Colonic mucosa (tissue), 4 donors: ENCODE measurements at regions of chr20 and their contacts with region 1.

Region 1: DNA sequence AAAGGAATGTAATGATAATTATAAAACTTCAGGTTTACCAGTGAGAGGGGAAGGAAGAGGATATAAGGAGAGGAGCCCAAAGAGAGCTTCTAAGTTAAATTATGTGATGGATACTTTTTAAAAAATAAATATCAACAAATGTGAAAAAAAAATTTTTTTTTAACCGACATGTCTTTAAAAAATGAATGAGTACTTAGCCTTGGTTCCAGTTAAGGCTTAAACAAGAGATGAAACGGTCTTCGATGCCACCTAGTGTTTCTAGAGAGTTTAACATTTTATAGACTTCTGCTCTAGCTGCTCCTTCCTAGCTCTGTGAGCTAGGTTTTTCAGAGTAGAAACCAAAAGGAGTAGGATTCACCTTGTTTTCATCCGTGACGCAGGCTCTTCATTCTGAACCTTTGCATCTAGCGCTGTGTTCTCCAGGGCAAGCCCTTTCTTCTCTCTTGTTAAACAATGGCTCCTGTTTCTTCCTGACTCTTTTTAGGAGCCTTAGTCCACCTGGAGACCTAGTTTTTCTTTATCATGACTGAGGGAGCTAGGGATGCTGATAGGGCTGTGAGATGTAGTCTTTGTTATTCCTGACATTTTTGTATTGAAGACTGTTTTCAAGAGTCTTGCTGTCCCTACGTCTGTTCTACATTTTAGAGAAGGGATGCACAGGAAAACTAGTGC is 42.4 kb upstream of the GNRH2 start:
- DNase-seq: no peak
- H3K4me3 ChIP-seq: no peak overlapping the region
- H3K27ac ChIP-seq: no peak overlapping the region
- H3K4me1 ChIP-seq: no peaks in the 10 kb centered on the region
- H3K27me3 ChIP-seq: no peaks in the 10 kb centered on the region
- CTCF ChIP-seq: peak; percentile 43

Region 2: GRCh38 chr20:2914160-2914559 is 86.8 kb before region 1 on chr20:
- intact Hi-C with region 1: loop called (anchors 5 kb)
- DNase-seq: no peak
- H3K4me3 ChIP-seq: no peak overlapping the region
- H3K27ac ChIP-seq: no peak overlapping the region
- H3K4me1 ChIP-seq: no peaks in the 10 kb centered on the region
- H3K27me3 ChIP-seq: no peaks in the 10 kb centered on the region
- CTCF ChIP-seq: no peak

Region 3: DNA sequence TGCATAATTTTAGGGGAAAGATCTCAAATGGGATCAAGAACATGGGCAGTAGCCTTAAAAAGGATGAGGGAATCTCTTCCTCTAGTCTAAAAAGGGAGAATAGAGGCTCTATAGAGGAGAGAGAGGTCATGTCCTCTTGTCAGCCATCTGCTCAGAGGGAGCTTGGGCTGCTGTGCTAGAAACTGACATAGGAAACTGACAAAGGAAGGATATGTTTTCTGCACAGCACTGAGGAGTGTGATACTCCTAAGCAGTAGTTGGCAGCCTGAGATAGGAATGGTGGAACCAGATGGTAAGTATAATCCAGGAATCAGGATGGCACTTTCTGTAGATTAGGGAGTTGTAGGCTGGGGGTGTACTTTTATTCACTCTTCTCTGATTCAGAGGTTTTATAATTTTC is 68.5 kb before region 1 on chr20:
- intact Hi-C with region 1: no loop called
- DNase-seq: no peak
- H3K4me3 ChIP-seq: no peak overlapping the region
- H3K27ac ChIP-seq: no peak overlapping the region
- H3K4me1 ChIP-seq: no peaks in the 10 kb centered on the region
- H3K27me3 ChIP-seq: no peaks in the 10 kb centered on the region
- CTCF ChIP-seq: no peak